Activated CD8-positive, alpha-beta T cell treated with anti-CD3 and anti-CD28 coated beads for 36 hours (primary cell): ENCODE measurements at regions of chr18 and their contacts with region 1.

Region 1: GRCh38 chr18:62714671-62715435 is 488 bp upstream of the PHLPP1 start:
- DNase-seq: peak; percentile 94
- ATAC-seq: peak; percentile 76
- H3K4me3 Mint-ChIP-seq: peak overlapping the region; percentile 82
- H3K27ac Mint-ChIP-seq: peak overlapping the region; percentile 88
- H3K4me1 Mint-ChIP-seq: peaks cover 32% of the 10 kb centered on the region
- H3K27me3 Mint-ChIP-seq: peaks cover 1% of the 10 kb centered on the region
- CTCF ChIP-seq: peak; percentile 71

Region 2: GRCh38 chr18:62584241-62585120 is 130.4 kb before region 1 on chr18:
- CTCF ChIA-PET with region 1: interaction called, 3 read pairs
- POLR2A ChIA-PET with region 1: interaction called, 4 read pairs
- intact Hi-C with region 1: loop called (anchors 10 kb)
- DNase-seq: peak; percentile 94
- ATAC-seq: peak; percentile 85
- H3K4me3 Mint-ChIP-seq: peak overlapping the region; percentile 4
- H3K27ac Mint-ChIP-seq: peak overlapping the region; percentile 85
- H3K4me1 Mint-ChIP-seq: peaks cover 40% of the 10 kb centered on the region
- H3K27me3 Mint-ChIP-seq: no peaks in the 10 kb centered on the region
- CTCF ChIP-seq: peak; percentile 99

Region 3: DNA sequence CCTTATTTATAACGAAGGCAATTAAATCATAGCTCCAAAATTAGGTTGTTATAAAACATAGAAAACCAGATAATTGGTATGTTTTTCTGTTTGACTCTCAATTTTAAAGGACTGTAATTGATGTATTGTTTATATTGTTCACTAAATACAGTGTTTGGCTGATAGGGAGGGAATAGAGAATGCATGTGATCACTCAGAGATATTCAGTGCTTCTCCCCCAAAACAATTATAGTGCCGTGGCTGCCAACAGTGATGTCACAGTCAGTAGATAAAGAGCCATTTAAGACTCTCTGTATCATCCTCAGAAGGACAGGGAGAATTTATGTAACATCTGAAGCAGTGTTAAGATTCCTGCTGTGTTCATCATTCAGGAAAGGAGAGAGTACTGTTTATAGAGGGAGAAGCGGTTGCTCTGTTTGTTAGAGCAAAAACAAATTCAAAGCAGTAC is 70.1 kb after region 1 on chr18:
- CTCF ChIA-PET with region 1: interaction called, 7 read pairs
- POLR2A ChIA-PET with region 1: interaction called, 6 read pairs
- intact Hi-C with region 1: loop called (anchors 5 kb)
- DNase-seq: peak; percentile 30
- ATAC-seq: peak; percentile 46
- H3K4me3 Mint-ChIP-seq: no peak overlapping the region
- H3K27ac Mint-ChIP-seq: peak overlapping the region; percentile 85
- H3K4me1 Mint-ChIP-seq: peaks cover 58% of the 10 kb centered on the region
- H3K27me3 Mint-ChIP-seq: no peaks in the 10 kb centered on the region
- CTCF ChIP-seq: no peak

Region 4: GRCh38 chr18:62844850-62845643 is 130.2 kb after region 1 on chr18:
- CTCF ChIA-PET with region 1: no interaction called
- POLR2A ChIA-PET with region 1: no interaction called
- intact Hi-C with region 1: loop called (anchors 5 kb)
- DNase-seq: peak; percentile 38
- ATAC-seq: peak; percentile 86
- H3K4me3 Mint-ChIP-seq: peak overlapping the region; percentile 43
- H3K27ac Mint-ChIP-seq: peak overlapping the region; percentile 77
- H3K4me1 Mint-ChIP-seq: peaks cover 33% of the 10 kb centered on the region
- H3K27me3 Mint-ChIP-seq: no peaks in the 10 kb centered on the region
- CTCF ChIP-seq: no peak

Region 5: DNA sequence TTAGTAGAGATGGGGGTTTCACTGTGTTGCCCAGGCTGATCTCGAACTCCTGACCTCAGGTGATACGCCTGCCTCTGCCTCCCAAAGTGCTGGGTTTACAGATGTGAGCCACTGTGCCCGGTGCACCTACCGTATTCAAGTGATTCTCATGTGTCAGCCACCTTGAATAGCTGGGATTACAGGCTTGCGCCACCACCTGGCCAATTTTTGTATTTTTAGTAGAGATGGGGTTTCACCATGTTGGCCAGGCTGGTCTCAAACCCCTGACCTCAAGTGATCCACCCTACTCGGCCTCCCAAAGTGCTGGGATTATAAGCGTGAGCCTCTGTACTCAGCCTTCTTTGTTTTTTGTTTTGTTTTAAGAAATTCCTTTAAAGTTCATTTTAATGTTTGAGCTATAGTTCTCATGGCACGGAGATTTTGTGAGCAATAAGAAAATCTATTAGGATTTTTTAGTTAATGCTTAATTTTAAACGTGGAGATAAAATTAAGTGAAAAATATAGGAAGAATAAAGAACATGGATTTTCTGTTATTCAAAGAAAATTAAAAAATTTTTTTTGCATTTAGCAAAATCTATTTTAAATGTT is 243.1 kb after region 1 on chr18:
- CTCF ChIA-PET with region 1: interaction called, 34 read pairs
- POLR2A ChIA-PET with region 1: no interaction called
- intact Hi-C with region 1: loop called (anchors 5 kb)
- DNase-seq: peak; percentile 75
- ATAC-seq: peak; percentile 82
- H3K4me3 Mint-ChIP-seq: no peak overlapping the region
- H3K27ac Mint-ChIP-seq: no peak overlapping the region
- H3K4me1 Mint-ChIP-seq: peaks cover 8% of the 10 kb centered on the region
- H3K27me3 Mint-ChIP-seq: no peaks in the 10 kb centered on the region
- CTCF ChIP-seq: peak; percentile 61

Region 6: DNA sequence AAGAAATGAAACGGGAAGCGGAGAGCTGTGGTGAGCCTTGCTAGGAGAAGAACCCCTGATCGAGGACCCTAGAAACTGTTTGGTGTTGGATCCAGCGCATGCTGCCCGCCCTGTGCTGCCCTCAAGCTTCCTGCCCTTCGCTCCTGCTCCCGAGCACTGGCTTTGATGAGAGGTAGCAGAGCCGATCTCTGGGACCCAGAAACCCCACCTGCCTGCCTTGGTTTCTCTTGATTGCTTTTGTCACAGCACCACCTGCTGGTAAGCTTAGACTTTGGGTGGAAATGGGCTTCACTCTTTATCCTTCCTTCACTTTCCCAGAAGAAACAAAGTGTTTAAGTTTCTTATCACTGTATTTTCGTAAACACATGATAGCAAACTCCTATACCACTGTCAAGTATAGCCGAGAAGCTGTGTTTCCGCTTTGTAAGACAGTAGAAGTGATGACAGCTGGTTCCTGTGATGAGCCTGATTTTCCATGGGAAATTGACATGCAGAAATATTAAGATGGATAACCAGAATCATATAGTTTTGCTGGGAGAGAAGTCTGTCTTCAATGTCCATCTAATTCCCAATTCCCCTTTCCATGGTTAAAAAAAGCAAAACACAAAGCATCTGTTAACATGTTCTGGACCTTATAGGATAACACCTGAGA is 267.9 kb after region 1 on chr18:
- CTCF ChIA-PET with region 1: interaction called, 48 read pairs
- POLR2A ChIA-PET with region 1: interaction called, 7 read pairs
- intact Hi-C with region 1: loop called (anchors 2 kb)
- DNase-seq: peak; percentile 69
- ATAC-seq: peak; percentile 71
- H3K4me3 Mint-ChIP-seq: no peak overlapping the region
- H3K27ac Mint-ChIP-seq: no peak overlapping the region
- H3K4me1 Mint-ChIP-seq: no peaks in the 10 kb centered on the region
- H3K27me3 Mint-ChIP-seq: no peaks in the 10 kb centered on the region
- CTCF ChIP-seq: peak; percentile 85

Region 7: DNA sequence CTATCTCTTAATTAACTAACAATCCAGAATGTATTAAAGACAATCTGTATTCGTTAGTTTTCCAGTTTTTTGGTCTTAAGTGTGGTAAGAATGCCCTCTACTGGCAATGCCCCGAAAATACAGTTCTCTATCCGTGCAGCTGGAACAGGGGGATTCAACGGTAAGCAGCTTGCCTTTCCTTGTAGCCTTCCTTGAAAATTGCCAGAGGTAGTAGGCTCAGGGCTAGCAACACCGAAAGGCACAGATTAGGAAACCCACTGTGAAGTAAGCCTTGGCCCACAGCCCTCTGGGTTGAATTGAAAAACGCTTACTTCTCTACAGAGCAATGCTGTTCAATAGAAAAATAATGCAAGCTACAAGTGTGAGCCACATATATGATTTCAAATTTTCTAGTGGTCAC is 724.5 kb after region 1 on chr18:
- CTCF ChIA-PET with region 1: no interaction called
- POLR2A ChIA-PET with region 1: no interaction called
- intact Hi-C with region 1: loop called (anchors 10 kb)
- DNase-seq: peak; percentile 58
- ATAC-seq: peak; percentile 75
- H3K4me3 Mint-ChIP-seq: no peak overlapping the region
- H3K27ac Mint-ChIP-seq: no peak overlapping the region
- H3K4me1 Mint-ChIP-seq: no peaks in the 10 kb centered on the region
- H3K27me3 Mint-ChIP-seq: peaks cover 2% of the 10 kb centered on the region
- CTCF ChIP-seq: peak; percentile 92